ENCODE measurements at regions of chr20 and their contacts with region 1.

Region 1: DNA sequence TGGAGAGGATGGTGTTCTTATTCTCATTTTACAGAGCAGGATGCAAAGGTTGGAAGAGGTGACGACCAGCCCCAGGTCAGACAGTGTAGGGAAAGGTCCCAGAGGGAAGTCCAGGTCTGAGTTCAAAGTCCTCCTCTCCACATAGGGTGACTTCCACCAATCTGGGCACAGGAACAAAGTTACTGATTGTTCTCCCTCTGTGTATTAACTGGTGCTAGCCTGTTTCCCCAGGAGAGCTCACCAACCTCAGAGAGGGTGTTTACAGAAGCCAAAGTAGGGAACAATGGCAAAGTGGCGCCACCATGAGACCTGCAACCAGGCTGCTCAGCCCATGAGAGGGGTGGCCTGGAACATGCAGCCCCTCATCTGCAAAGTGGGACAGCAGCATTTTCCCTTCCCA is 16.8 kb upstream of the SIRPB1 start:
- DNase-seq: peak; percentile 93
- ATAC-seq: peak; percentile 98
- H3K4me3 ChIP-seq: no peak overlapping the region
- H3K27ac ChIP-seq: peak overlapping the region; percentile 2
- H3K4me1 ChIP-seq: peaks cover 41% of the 10 kb centered on the region
- H3K27me3 ChIP-seq: no peaks in the 10 kb centered on the region
- CTCF ChIP-seq: peak; percentile 89
- EP300 ChIP-seq: peak in 1 of 2 experiments; percentile 60; a peak in 2 of 4 replicates
- POLR2A ChIP-seq: no peak
- RAD21 ChIP-seq: peak; percentile 63

Region 2: GRCh38 chr20:1503564-1504227 is 132.9 kb before region 1 on chr20:
- CTCF ChIA-PET with region 1: no interaction called
- POLR2A ChIA-PET with region 1: no interaction called
- in situ Hi-C with region 1: no loop called
- intact Hi-C with region 1: loop called (anchors 1 kb)
- DNase-seq: peak; percentile 94
- ATAC-seq: peak; percentile 100
- H3K4me3 ChIP-seq: no peak overlapping the region
- H3K27ac ChIP-seq: no peak overlapping the region
- H3K4me1 ChIP-seq: peaks cover 9% of the 10 kb centered on the region; the same call in 1 of the 2 replicates
- H3K27me3 ChIP-seq: peaks cover 0 to 6% of the 10 kb centered on the region in 2 experiments; a peak in 3 of 5 replicates
- CTCF ChIP-seq: peak; percentile 97
- EP300 ChIP-seq: no peak
- POLR2A ChIP-seq: no peak
- RAD21 ChIP-seq: peak; percentile 95

Region 3: GRCh38 chr20:1509237-1509636 is 127.4 kb before region 1 on chr20:
- CTCF ChIA-PET with region 1: no interaction called
- POLR2A ChIA-PET with region 1: no interaction called
- in situ Hi-C with region 1: no loop called
- intact Hi-C with region 1: loop called (anchors 1 kb)
- DNase-seq: peak; percentile 25
- ATAC-seq: peak; percentile 95
- H3K4me3 ChIP-seq: no peak overlapping the region
- H3K27ac ChIP-seq: no peak overlapping the region
- H3K4me1 ChIP-seq: no peaks in the 10 kb centered on the region
- H3K27me3 ChIP-seq: peaks cover 0 to 3% of the 10 kb centered on the region in 2 experiments; a peak in 3 of 5 replicates
- CTCF ChIP-seq: peak; percentile 69
- EP300 ChIP-seq: no peak
- POLR2A ChIP-seq: no peak
- RAD21 ChIP-seq: peak; percentile 50; the same call in 1 of the 2 replicates

Region 4: DNA sequence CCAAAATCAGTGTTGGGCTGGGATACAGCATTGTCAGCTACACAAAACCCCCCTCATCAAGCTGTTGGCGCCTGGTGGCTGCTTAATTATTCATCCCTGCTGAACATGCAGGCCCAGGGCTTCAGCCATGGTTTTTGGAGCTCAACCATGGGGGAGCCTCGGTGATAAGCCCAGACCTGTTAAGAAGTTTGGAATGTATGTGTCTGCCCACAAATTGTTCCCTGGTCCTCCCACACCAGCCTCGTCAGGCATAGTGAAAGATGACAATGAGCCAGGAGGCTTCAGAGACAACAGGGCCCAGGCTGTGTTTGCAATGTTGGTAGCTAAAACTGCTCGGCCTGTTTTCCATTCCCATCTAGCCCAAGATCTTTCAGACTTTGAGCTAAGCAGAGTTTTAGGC is 223.8 kb after region 1 on chr20:
- CTCF ChIA-PET with region 1: no interaction called
- POLR2A ChIA-PET with region 1: no interaction called
- in situ Hi-C with region 1: no loop called
- intact Hi-C with region 1: no loop called
- DNase-seq: no peak
- ATAC-seq: no peak
- H3K4me3 ChIP-seq: no peak overlapping the region
- H3K27ac ChIP-seq: no peak overlapping the region
- H3K4me1 ChIP-seq: peaks cover 40% of the 10 kb centered on the region
- H3K27me3 ChIP-seq: no peaks in the 10 kb centered on the region
- CTCF ChIP-seq: no peak
- EP300 ChIP-seq: no peak
- POLR2A ChIP-seq: no peak
- RAD21 ChIP-seq: no peak

Measured in HepG2 (cell line).